HCT116 (cell line): ENCODE measurements at regions of chr17 and their contacts with region 1.

Region 1: DNA sequence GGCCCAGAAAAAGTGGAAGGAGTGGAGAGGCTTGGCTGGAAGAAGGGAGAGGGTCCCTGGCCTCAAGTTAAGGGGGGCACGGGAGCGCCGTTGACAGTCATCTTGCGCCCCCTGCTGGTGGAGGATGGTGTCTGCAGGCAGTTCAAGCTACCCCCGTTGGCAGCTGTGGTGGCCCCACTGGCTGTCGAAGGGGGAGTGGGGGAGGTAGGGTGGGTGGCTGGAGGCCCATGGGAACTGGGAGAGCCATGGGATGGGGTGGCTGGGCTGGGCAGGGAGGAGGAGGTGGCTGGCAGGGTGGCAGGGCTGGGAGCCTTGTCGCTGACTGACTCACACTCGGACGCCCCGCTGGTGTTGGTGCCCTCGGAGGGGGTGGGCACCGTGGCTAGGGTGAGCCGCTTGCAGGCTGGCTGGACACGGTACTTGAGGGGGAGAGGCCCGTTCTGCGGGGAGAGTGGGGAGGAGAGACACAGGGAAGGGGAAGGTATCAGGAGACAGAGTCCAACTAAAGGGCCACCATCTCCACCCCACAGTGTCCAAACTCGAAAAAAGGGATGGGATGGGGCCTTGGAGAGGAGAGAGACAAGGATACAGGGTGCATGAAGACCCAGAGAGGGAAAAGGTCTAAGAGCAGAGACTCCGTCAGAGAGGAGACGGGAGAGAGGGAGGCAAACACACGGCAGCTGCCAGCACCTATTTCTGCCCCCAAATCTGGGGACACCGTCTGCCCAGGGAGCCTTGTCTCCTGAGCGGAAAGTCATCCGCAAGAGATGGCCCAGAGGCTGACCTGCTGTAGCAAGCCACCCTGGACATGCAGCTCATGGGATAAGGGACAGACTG is 5.2 kb downstream of the CISD3 start:
- DNase-seq: no peak
- ATAC-seq: peak; percentile 29
- H3K4me3 ChIP-seq: no peak overlapping the region
- H3K27ac ChIP-seq: peak overlapping the region; percentile 43; the same call in 1 of the 2 replicates
- H3K4me1 ChIP-seq: peaks cover 8 to 26% of the 10 kb centered on the region in 2 experiments; a peak in 2 of 4 replicates
- H3K27me3 ChIP-seq: no peaks in the 10 kb centered on the region
- CTCF ChIP-seq: peak; percentile 56 to 90 (median 90); a peak in 5 of 6 replicates
- POLR2A ChIP-seq: peak; percentile 7
- RAD21 ChIP-seq: peak; percentile 74

Region 2: DNA sequence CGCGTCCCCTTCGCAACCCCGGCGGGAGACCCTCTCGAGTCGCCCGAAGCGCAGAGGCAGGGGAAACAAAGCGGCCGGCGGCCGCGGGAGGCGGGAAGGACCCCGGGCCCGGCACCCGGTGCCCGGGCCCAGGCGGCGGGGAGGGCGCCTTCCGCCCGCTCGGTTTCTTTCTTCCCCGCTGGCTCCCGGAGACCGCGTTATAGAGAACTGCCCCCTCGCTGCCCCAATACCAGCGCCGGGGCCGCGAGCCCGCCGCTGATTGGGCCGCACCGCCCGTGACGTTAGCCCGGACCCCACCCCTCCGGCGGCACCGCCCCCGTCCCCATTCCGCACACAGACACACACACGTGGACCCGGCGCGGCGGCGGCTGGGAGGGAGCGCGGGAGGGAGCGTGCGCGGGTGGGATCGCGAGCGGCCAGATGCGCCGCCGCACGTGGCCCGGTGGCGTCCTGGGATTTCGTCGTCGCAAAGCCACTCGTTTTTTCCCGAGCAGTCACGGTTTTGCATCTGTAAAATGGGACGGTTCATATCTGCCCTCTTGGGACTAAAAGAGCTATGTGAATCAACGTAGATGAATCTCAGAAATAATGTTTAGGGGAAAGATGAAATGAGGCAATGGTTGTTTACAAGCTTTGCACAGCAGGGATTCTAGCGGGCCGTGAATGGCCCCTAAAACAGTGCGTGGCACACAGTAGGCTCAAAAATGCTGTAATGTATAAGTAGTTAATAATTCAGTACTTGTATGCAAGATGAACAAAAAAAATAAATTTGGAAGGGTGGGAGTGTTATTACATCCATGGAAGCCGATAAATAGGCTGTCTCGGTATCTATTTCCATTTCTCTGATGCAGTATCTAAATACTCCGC is 60.4 kb before region 1 on chr17 and contains the start of gene EPOP:
- CTCF ChIA-PET with region 1: interaction called, 19 read pairs
- POLR2A ChIA-PET with region 1: no interaction called
- RAD21 ChIA-PET with region 1: interaction called in 1 of 2 experiments, 3 read pairs
- intact Hi-C with region 1: loop called (anchors 1 kb)
- DNase-seq: peak; percentile 77
- ATAC-seq: peak; percentile 84
- H3K4me3 ChIP-seq: peak within 1 kb of the TSS; percentile 75 to 77
- H3K27ac ChIP-seq: peak within 1 kb of the TSS; percentile 91
- H3K4me1 ChIP-seq: peaks cover 29 to 64% of the 10 kb centered on the region in 2 experiments
- H3K27me3 ChIP-seq: no peaks in the 10 kb centered on the region
- CTCF ChIP-seq: 0 out of 6 replicates have a peak, but pooled peaks of 1 of the 3 experiments have one; percentile 6
- POLR2A ChIP-seq: no peak
- RAD21 ChIP-seq: no peak
- total RNA-seq, gene EPOP: 37.9 TPM

Region 3: DNA sequence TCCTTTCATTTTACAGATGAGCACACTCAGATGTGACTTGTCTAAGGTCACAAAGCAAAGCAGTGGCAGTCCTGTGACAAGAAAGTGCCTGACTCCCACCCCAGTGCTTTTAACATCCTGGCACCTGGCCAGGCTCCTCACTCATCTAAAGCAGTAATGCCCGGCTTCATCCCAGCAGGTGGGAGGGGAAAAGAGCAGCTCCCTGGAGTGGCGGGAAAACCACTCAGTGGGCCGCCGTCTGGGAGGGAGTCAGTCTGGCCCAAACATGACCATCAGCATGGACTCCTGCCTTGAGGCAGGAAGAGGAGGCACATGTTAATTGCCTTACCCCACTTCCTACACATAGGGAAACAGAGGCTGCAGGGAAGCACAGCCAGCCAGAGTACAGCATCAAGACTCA is 10.2 kb after region 1 on chr17:
- CTCF ChIA-PET with region 1: interaction called, 11 read pairs
- POLR2A ChIA-PET with region 1: no interaction called
- RAD21 ChIA-PET with region 1: no interaction called
- intact Hi-C with region 1: no loop called
- DNase-seq: no peak
- ATAC-seq: no peak
- H3K4me3 ChIP-seq: no peak overlapping the region
- H3K27ac ChIP-seq: peak overlapping the region; percentile 10; the same call in 1 of the 2 replicates
- H3K4me1 ChIP-seq: peaks cover 26 to 56% of the 10 kb centered on the region in 2 experiments
- H3K27me3 ChIP-seq: no peaks in the 10 kb centered on the region
- CTCF ChIP-seq: no peak
- POLR2A ChIP-seq: no peak
- RAD21 ChIP-seq: no peak

Region 4: DNA sequence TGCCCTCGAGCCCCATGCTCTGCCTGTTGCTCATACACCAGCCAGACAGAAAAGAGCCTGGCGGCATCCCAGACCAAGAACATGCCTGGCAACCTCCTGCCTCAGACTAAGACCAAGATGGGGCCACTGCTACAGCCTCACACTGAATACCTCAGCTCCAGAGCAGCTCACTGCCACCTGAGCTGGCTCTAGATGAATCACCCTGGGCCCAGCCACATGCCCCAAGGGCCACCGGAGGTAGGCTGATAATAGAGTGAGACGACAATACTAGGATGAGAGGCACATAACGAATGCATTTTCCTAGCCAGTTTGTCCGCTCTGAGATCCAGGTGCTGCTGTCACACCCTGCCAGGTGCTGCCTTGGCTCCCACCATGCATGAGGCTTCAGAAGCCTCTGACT is 51.0 kb after region 1 on chr17:
- CTCF ChIA-PET with region 1: no interaction called
- POLR2A ChIA-PET with region 1: no interaction called
- RAD21 ChIA-PET with region 1: no interaction called
- intact Hi-C with region 1: no loop called
- DNase-seq: no peak
- ATAC-seq: no peak
- H3K4me3 ChIP-seq: no peak overlapping the region
- H3K27ac ChIP-seq: no peak overlapping the region
- H3K4me1 ChIP-seq: no peaks in the 10 kb centered on the region
- H3K27me3 ChIP-seq: no peaks in the 10 kb centered on the region
- CTCF ChIP-seq: no peak
- POLR2A ChIP-seq: no peak
- RAD21 ChIP-seq: no peak